ENCODE measurements at regions of chr22 and their contacts with region 1.

Region 1: GRCh38 chr22:36692280-36692679 is 11.3 kb downstream of the CACNG2 start:
- DNase-seq: no peak
- H3K4me3 ChIP-seq: no peak overlapping the region
- H3K27ac ChIP-seq: no peak overlapping the region
- H3K4me1 ChIP-seq: no peaks in the 10 kb centered on the region
- H3K27me3 ChIP-seq: peaks cover 2% of the 10 kb centered on the region
- CTCF ChIP-seq: no peak

Region 2: DNA sequence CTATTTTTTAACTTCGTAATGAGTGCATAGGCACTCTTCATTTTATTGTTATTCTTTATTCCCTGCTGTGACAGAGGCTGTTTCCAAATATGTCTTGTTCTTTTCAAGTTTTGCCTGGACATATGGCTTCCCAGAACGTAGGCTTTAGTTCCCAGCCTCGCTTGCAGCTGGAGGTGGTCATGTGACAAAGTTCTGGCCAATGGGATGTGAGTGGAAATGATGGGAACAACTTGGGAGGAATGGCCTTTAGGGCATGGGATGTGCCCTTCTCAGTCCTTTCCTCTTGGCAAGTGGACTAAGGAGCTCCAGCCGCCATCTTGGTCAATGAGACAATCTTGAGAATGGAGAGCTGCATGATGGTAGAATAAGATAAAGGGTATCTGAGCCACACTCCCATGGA is 92.5 kb before region 1 on chr22:
- CTCF ChIA-PET with region 1: no interaction called
- dilution Hi-C with region 1: loop called (anchors 5 kb)
- in situ Hi-C with region 1: no loop called
- intact Hi-C with region 1: no loop called
- DNase-seq: no peak
- H3K4me3 ChIP-seq: no peak overlapping the region
- H3K27ac ChIP-seq: no peak overlapping the region
- H3K4me1 ChIP-seq: no peaks in the 10 kb centered on the region
- H3K27me3 ChIP-seq: peaks cover 8% of the 10 kb centered on the region
- CTCF ChIP-seq: no peak

Region 3: DNA sequence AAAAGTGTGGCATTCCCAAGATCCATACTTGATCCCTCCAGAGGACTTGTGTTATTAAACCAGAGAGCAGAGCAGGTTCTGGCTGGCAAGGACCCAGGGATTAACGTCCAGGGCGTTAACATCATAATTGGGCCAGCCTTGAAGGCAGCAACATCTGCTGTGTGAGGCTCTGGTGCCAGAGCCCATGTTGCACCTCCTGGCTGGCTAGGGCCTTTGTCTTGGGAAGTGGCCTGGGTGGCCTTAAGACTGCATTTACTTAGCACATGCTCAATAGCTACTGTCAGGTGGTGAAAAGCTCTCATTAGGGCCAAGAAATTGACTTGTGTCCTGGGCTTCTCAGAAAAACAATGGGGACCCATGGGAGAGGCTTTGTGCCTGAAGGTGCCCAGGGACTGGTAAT is 55.4 kb before region 1 on chr22:
- CTCF ChIA-PET with region 1: no interaction called
- dilution Hi-C with region 1: loop called (anchors 5 kb)
- in situ Hi-C with region 1: no loop called
- intact Hi-C with region 1: no loop called
- DNase-seq: no peak
- H3K4me3 ChIP-seq: no peak overlapping the region
- H3K27ac ChIP-seq: no peak overlapping the region
- H3K4me1 ChIP-seq: peaks cover 1% of the 10 kb centered on the region
- H3K27me3 ChIP-seq: no peaks in the 10 kb centered on the region
- CTCF ChIP-seq: no peak

Measured in mammary epithelial cell (primary cell).